Activated naive CD4-positive, alpha-beta T cell treated with anti-CD3 and anti-CD28 coated beads for 36 hours (primary cell): ENCODE measurements at regions of chr9 and their contacts with region 1.

Region 1: GRCh38 chr9:19048966-19049916 is at the start of gene RRAGA:
- DNase-seq: peak; percentile 94
- H3K4me3 Mint-ChIP-seq: peak within 1 kb of the TSS; percentile 85
- H3K27ac Mint-ChIP-seq: peak within 1 kb of the TSS; percentile 90
- H3K4me1 Mint-ChIP-seq: peaks cover 25% of the 10 kb centered on the region
- H3K27me3 Mint-ChIP-seq: no peaks in the 10 kb centered on the region
- total RNA-seq, gene RRAGA: 21.6 to 22.3 TPM

Region 2: GRCh38 chr9:18596920-18597319 is 452.3 kb before region 1 on chr9:
- CTCF ChIA-PET with region 1: no interaction called
- intact Hi-C with region 1: no loop called
- DNase-seq: no peak
- H3K4me3 Mint-ChIP-seq: no peak overlapping the region
- H3K27ac Mint-ChIP-seq: no peak overlapping the region
- H3K4me1 Mint-ChIP-seq: no peaks in the 10 kb centered on the region
- H3K27me3 Mint-ChIP-seq: no peaks in the 10 kb centered on the region

Region 3: DNA sequence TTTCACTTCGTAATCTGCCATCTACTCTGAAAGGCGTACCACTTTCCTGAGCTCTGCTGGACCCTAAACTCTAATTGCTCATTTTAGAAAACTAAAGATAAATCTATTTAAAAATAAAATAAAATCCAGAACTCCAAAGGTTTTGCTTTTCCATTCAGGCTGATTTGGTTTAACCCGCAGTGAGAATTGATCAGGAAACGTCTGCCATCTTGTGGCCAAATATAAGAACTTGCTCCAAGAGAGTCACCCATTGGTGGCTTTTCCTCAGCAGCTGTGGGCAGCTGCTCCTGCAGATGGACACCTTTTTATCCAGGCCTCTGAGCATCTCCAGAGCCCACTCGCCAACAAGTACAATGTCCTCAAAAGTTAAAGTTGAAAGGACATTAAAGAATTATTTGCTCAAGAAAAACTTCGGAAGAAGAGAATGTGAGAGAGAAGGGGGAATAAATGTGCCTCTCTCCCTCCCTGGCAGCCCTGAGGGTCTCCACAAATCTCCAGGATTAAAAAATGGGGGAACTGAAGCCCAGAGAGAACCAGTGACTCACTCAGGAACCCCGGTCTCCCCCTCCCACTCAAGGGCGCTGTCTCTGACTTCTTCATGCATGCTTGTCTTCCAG is 20.3 kb before region 1 on chr9:
- CTCF ChIA-PET with region 1: interaction called, 10 read pairs
- intact Hi-C with region 1: no loop called
- DNase-seq: peak; percentile 54
- H3K4me3 Mint-ChIP-seq: no peak overlapping the region
- H3K27ac Mint-ChIP-seq: no peak overlapping the region
- H3K4me1 Mint-ChIP-seq: peaks cover 7% of the 10 kb centered on the region
- H3K27me3 Mint-ChIP-seq: peaks cover 10% of the 10 kb centered on the region

Region 4: DNA sequence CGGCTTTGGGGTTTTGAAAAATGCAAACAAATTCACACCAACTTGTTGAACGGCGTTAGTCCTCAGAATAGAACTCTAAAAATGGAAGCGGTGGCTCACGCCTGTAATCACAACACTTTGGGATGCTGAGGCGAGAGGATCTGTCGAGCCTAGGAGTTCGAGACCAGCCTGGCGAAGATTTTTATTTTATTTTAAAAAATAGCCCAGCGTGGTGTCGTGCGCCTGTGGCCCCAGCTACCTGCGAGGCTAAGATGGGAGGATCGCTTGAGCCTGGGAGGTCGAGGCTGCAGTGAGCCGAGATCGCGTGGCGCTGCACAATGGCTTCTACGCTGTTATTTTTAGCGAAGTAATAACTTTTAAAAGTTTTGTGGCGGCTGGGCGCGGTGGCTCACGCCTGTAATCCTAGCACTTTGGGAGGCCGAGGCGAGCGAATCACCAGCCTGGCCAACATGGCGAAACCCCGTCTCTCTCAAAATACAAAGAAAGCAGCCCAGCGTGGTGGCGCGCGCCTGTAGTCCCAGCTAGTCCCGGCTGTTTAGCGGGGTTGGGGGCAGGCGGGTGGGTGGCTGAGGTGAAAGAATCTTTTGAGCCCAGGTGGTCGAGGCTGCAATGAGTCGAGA is 78.8 kb after region 1 on chr9:
- CTCF ChIA-PET with region 1: interaction called, 4 read pairs
- intact Hi-C with region 1: loop called (anchors 1 kb)
- DNase-seq: peak; percentile 45
- H3K4me3 Mint-ChIP-seq: peak overlapping the region; percentile 92
- H3K27ac Mint-ChIP-seq: peak overlapping the region; percentile 91
- H3K4me1 Mint-ChIP-seq: peaks cover 53% of the 10 kb centered on the region
- H3K27me3 Mint-ChIP-seq: no peaks in the 10 kb centered on the region

Region 5: DNA sequence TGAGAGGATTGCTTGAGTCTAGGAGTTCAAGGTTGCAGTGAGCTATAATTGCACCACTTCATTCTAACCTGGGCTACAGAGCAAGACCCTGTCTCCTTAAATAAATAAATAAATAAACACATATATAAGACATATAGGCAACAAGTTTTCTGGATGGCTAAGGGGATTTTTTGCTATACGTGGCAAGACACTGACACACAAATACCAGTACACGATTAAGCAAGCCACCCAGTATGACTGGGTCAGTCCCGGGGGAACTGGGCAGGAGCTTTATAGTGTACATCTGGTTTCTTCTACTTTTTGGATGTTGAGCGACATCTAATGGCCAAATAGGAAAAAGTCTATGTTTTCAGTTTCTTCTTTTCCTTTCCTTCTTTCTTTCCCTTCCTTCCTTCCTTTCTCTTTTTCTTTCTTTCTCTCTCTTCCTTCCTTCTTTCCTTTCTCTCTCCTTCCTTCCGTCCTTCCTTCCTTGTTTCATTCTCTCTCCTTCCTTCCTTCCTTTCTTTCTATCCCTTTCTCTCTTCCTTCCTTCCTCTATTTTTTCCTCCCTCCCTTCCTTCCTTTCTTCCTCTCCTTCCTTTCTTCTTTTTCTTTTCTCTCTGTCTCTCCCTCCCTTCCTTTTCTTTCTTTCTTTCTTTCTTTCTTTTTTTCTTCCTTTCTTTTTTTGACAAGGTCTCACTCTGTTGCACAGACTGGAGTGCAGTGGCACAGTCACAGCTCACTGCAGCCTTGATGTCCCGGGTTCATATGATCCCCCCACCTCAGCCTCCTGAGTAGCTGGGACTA is 125.1 kb after region 1 on chr9:
- CTCF ChIA-PET with region 1: interaction called, 41 read pairs
- intact Hi-C with region 1: loop called (anchors 1 kb)
- DNase-seq: peak; percentile 77
- H3K4me3 Mint-ChIP-seq: no peak overlapping the region
- H3K27ac Mint-ChIP-seq: no peak overlapping the region
- H3K4me1 Mint-ChIP-seq: peaks cover 22% of the 10 kb centered on the region
- H3K27me3 Mint-ChIP-seq: no peaks in the 10 kb centered on the region

Region 6: GRCh38 chr9:19230356-19231125 is 181.3 kb after region 1 on chr9 and contains the start of gene DENND4C:
- CTCF ChIA-PET with region 1: interaction called, 3 read pairs
- intact Hi-C with region 1: loop called (anchors 1 kb)
- DNase-seq: peak; percentile 78
- H3K4me3 Mint-ChIP-seq: peak within 1 kb of the TSS; percentile 67
- H3K27ac Mint-ChIP-seq: no peak within 1 kb of the TSS
- H3K4me1 Mint-ChIP-seq: peaks cover 15% of the 10 kb centered on the region
- H3K27me3 Mint-ChIP-seq: no peaks in the 10 kb centered on the region
- total RNA-seq, gene DENND4C: 8.7 to 9.0 TPM

Region 7: GRCh38 chr9:19408693-19409400 is 359.6 kb after region 1 on chr9 and contains the start of gene ACER2:
- CTCF ChIA-PET with region 1: no interaction called
- intact Hi-C with region 1: loop called (anchors 1 kb)
- DNase-seq: peak; percentile 94
- H3K4me3 Mint-ChIP-seq: peak within 1 kb of the TSS; percentile 87
- H3K27ac Mint-ChIP-seq: no peak within 1 kb of the TSS
- H3K4me1 Mint-ChIP-seq: peaks cover 14% of the 10 kb centered on the region
- H3K27me3 Mint-ChIP-seq: no peaks in the 10 kb centered on the region
- total RNA-seq, gene ACER2: 2.0 to 2.2 TPM